ENCODE measurements at regions of chr5 and their contacts with region 1.

Region 1: DNA sequence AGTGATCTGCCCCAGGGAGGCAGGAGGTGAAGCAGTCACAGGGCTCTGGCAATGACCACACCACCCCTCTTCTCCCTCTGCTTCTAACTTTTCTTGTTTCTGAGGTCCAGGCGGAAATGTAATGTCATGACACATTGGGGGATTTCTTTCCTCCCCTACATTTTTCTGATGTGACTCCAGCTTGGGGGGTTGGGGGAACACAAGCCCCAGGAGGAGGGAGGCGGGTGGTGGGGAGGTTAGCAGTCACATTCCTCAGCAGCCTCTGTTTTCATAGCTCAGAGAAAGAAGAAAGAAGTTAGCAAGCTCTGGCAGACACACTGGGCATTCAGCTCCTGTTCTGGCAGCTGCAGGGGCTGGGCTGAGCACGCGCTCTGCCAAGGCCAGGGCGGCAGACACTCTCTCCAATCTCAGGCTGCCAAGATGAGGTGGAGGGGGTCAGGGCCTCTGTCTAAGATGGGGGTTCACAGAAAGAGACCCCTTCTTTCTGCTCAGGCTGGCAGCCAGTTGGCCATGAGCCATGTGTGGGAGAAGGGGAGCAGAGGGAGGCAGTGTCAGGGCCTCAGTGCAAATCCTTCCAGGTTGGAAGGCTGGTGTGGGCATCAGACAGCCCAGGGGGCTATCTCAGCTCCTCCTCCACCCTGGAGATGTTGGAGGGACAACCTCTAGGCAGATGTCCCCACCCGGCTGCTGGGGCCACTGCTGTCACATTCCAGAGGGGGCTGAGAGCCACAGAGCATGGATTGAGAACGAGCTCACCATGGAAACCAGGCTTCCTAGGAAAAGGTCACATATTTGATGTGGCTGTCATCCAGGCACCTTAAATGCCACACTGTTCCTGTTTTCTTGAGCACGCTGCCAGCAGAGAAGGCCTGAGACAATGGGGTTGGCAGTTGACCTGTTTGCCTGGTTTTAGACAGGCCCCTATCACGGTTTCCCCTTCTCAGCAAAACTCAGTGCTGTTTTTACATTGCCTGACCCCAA is 20.1 kb upstream of the PFDN1 start:
- DNase-seq: peak; percentile 94
- H3K4me3 ChIP-seq: no peak overlapping the region
- H3K27ac ChIP-seq: peak overlapping the region; percentile 99
- H3K4me1 ChIP-seq: peaks cover 55% of the 10 kb centered on the region
- H3K27me3 ChIP-seq: no peaks in the 10 kb centered on the region
- CTCF ChIP-seq: no peak
- POLR2A ChIP-seq: no peak

Region 2: GRCh38 chr5:140251527-140251973 is 71.5 kb before region 1 on chr5:
- CTCF ChIA-PET with region 1: interaction called, 19 read pairs
- POLR2A ChIA-PET with region 1: no interaction called
- dilution Hi-C with region 1: no loop called
- intact Hi-C with region 1: loop called (anchors 1 kb)
- DNase-seq: peak; percentile 89
- H3K4me3 ChIP-seq: peak overlapping the region in 1 of 3 experiments; percentile 32
- H3K27ac ChIP-seq: peak overlapping the region; percentile 97
- H3K4me1 ChIP-seq: peaks cover 61% of the 10 kb centered on the region
- H3K27me3 ChIP-seq: no peaks in the 10 kb centered on the region
- CTCF ChIP-seq: no peak
- POLR2A ChIP-seq: peak; percentile 67

Region 3: GRCh38 chr5:140741967-140742366 is 418.9 kb after region 1 on chr5:
- CTCF ChIA-PET with region 1: no interaction called
- POLR2A ChIA-PET with region 1: no interaction called
- dilution Hi-C with region 1: no loop called
- intact Hi-C with region 1: no loop called
- DNase-seq: no peak
- H3K4me3 ChIP-seq: no peak overlapping the region
- H3K27ac ChIP-seq: no peak overlapping the region
- H3K4me1 ChIP-seq: no peaks in the 10 kb centered on the region
- H3K27me3 ChIP-seq: no peaks in the 10 kb centered on the region
- CTCF ChIP-seq: no peak
- POLR2A ChIP-seq: no peak